Endothelial cell of umbilical vein (primary cell): ENCODE measurements at regions of chr11 and their contacts with region 1.

Region 1: GRCh38 chr11:60265373-60266214 is 14.9 kb upstream of the MS4A4A start:
- DNase-seq: peak; percentile 83
- H3K4me3 ChIP-seq: no peak overlapping the region
- H3K27ac ChIP-seq: no peak overlapping the region
- H3K4me1 ChIP-seq: no peaks in the 10 kb centered on the region
- H3K27me3 ChIP-seq: peaks cover 11 to 20% of the 10 kb centered on the region in 2 experiments
- CTCF ChIP-seq: peak; percentile 36 to 42
- POLR2A ChIP-seq: no peak

Region 2: DNA sequence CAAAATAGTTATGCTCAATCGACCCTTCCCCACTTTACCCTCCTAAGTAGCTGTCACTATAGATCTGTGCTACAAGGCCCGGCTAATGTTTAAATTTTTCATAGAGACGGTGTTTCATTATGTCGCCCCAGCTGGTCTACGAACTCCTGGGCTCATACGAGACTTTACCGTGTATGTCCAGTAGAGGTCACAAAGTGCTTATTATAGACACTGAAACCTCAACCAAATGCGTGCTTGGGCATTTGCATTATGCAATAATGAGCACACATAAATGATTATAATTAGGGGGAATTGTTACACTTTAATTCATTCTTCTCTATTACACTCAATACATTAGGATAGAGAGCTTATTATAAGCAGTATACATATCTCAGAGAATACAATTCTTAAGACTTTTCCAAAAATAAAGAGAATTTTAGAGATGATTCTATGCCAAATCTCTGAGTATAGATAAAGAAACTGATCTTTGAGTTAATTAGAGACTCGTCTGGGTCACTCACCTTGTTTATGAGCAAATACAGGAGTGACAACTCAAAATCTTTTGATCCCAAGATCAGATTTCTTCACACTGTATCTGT is 442.5 kb before region 1 on chr11:
- CTCF ChIA-PET with region 1: interaction called, 4 read pairs
- POLR2A ChIA-PET with region 1: no interaction called
- dilution Hi-C with region 1: no loop called
- intact Hi-C with region 1: loop called (anchors 5 kb)
- DNase-seq: peak; percentile 87
- H3K4me3 ChIP-seq: no peak overlapping the region
- H3K27ac ChIP-seq: no peak overlapping the region
- H3K4me1 ChIP-seq: no peaks in the 10 kb centered on the region
- H3K27me3 ChIP-seq: no peaks in the 10 kb centered on the region
- CTCF ChIP-seq: peak; percentile 48 to 67
- POLR2A ChIP-seq: no peak

Region 3: DNA sequence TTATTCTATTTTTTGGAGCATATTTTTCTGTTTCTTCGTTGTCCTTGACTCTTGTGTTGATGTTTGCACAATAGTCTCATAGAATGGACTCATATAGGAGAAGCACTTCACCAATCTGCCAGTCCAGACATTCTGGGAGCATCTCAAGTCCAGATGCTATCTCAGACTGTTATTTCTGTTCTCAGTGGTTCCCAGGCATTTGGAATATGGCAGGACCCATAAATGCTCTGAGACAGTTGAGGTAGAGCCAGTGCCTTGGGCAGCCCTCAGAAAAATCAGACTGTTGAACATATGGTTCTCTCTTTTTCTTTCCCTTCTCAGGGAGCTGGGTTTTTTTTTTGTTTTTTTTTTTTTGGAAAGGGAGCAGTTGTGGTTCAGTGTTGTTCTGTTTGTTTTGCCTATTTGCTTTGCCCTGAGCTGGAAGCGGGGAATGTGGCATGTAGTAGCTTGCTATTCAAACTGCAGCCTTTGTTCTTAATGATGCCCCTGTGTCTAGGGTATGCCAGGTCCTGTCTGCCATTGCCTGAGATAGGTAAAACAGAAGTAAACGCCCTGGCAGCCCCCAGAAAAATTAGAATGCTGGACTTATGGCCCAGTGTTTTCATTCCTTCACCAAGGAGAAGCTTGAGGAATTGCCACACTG is 180.8 kb before region 1 on chr11:
- CTCF ChIA-PET with region 1: no interaction called
- POLR2A ChIA-PET with region 1: no interaction called
- dilution Hi-C with region 1: no loop called
- intact Hi-C with region 1: no loop called
- DNase-seq: no peak
- H3K4me3 ChIP-seq: no peak overlapping the region
- H3K27ac ChIP-seq: no peak overlapping the region
- H3K4me1 ChIP-seq: no peaks in the 10 kb centered on the region
- H3K27me3 ChIP-seq: peaks cover 5 to 10% of the 10 kb centered on the region in 2 experiments
- CTCF ChIP-seq: no peak
- POLR2A ChIP-seq: no peak

Region 4: DNA sequence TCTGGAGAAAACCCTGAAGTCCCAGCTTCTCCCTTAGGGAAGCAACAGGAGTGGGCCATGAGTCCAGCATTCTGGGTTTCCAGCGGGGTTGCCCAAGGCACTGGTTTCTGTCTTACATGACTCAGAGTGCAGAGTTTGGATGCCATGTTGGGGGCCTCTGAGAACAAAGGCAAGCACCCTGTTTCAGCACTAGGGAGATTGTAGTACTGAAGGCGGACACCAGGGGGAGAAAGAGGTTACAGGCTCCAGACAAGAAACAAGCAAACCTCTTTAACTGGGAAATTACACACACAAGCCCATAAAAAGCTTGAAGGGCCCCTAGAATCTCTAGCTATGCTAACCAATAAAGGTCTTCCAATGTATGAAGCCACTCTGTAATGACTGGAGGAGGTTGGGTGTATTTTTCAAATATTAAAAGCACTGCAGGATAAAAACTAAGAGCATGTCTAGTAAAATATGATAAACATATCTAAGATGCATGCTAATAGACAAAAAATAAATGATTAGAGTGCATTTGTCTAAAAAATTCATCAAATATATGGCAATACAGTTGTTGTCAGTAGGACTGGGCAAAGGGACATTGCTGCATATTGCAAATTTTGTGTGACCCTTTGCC is 68.5 kb after region 1 on chr11:
- CTCF ChIA-PET with region 1: interaction called, 30 read pairs
- POLR2A ChIA-PET with region 1: no interaction called
- dilution Hi-C with region 1: no loop called
- intact Hi-C with region 1: no loop called
- DNase-seq: peak; percentile 79
- H3K4me3 ChIP-seq: no peak overlapping the region
- H3K27ac ChIP-seq: no peak overlapping the region
- H3K4me1 ChIP-seq: no peaks in the 10 kb centered on the region
- H3K27me3 ChIP-seq: peaks cover 0 to 3% of the 10 kb centered on the region in 2 experiments
- CTCF ChIP-seq: peak; percentile 65 to 85
- POLR2A ChIP-seq: no peak

Region 5: DNA sequence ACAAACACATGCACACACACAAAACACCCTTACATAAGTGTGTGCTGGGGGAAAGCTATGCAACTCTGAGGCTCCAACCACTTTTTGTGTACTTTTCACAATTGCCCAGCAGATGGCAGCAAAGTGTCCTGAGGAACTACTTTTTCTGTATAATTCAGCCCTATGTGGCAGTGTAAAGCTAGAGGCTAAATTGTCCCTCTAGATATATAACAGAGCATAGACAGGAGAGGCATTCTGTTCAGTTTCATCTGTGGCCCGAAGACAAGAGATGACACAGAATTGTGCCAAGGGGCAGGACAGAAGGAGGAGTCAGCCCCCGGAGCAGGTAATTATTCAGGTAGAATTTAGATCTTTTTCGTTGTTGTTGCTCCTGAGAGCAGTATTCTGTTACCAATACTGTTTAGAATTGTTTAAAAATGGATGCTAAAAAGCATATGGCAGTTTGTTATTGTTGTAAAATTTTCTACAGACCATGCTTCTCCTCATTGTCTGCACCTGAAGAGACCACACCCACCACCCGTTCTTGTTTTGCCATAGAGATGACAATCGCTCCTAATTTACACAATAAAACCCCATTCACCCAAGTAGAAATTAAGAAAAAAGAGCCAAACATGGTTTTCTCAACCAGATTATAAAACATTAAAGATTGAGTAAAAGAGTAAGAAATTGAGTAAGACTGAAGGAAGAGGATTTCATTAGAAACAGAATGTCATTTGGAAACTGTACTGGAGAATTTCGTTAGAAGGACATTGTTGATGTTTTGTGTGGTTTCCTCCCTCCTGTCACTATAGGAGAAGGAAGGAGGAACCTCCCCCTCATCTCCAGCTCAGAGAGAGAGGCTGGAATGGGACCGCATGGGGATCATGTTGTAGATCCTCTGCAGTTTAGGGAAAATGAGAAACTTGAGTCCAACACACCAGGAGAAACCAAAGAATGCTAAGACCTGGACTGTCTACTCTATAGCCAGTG is 98.2 kb after region 1 on chr11:
- CTCF ChIA-PET with region 1: interaction called, 30 read pairs
- POLR2A ChIA-PET with region 1: no interaction called
- dilution Hi-C with region 1: no loop called
- intact Hi-C with region 1: loop called (anchors 5 kb)
- DNase-seq: peak; percentile 67
- H3K4me3 ChIP-seq: no peak overlapping the region
- H3K27ac ChIP-seq: no peak overlapping the region
- H3K4me1 ChIP-seq: no peaks in the 10 kb centered on the region
- H3K27me3 ChIP-seq: peaks cover 15 to 16% of the 10 kb centered on the region in 2 experiments
- CTCF ChIP-seq: peak; percentile 66 to 68
- POLR2A ChIP-seq: no peak

Region 6: GRCh38 chr11:60615497-60615896 is 349.9 kb after region 1 on chr11:
- CTCF ChIA-PET with region 1: interaction called, 35 read pairs
- POLR2A ChIA-PET with region 1: no interaction called
- dilution Hi-C with region 1: no loop called
- intact Hi-C with region 1: loop called (anchors 1 kb)
- DNase-seq: no peak
- H3K4me3 ChIP-seq: no peak overlapping the region
- H3K27ac ChIP-seq: no peak overlapping the region
- H3K4me1 ChIP-seq: no peaks in the 10 kb centered on the region
- H3K27me3 ChIP-seq: peaks cover 2% of the 10 kb centered on the region in 2 experiments
- CTCF ChIP-seq: no peak
- POLR2A ChIP-seq: no peak

Region 7: GRCh38 chr11:60762851-60763691 is 497.5 kb after region 1 on chr11:
- CTCF ChIA-PET with region 1: interaction called, 5 read pairs
- POLR2A ChIA-PET with region 1: no interaction called
- dilution Hi-C with region 1: no loop called
- intact Hi-C with region 1: loop called (anchors 5 kb)
- DNase-seq: no peak
- H3K4me3 ChIP-seq: no peak overlapping the region
- H3K27ac ChIP-seq: no peak overlapping the region
- H3K4me1 ChIP-seq: no peaks in the 10 kb centered on the region
- H3K27me3 ChIP-seq: peaks cover 12 to 24% of the 10 kb centered on the region in 2 experiments
- CTCF ChIP-seq: peak; percentile 6 to 17
- POLR2A ChIP-seq: no peak

Region 8: GRCh38 chr11:60797846-60798630 is 532.4 kb after region 1 on chr11:
- CTCF ChIA-PET with region 1: no interaction called
- POLR2A ChIA-PET with region 1: no interaction called
- dilution Hi-C with region 1: no loop called
- intact Hi-C with region 1: no loop called
- DNase-seq: no peak
- H3K4me3 ChIP-seq: no peak overlapping the region
- H3K27ac ChIP-seq: no peak overlapping the region
- H3K4me1 ChIP-seq: no peaks in the 10 kb centered on the region
- H3K27me3 ChIP-seq: peaks cover 10 to 19% of the 10 kb centered on the region in 2 experiments
- CTCF ChIP-seq: no peak
- POLR2A ChIP-seq: no peak